ENCODE measurements at regions of chr12 and their contacts with region 1.

Region 1: GRCh38 chr12:10140001-10140400 is 10.0 kb upstream of the CLEC7A start:
- DNase-seq: no peak
- H3K4me3 ChIP-seq: no peak overlapping the region
- CTCF ChIP-seq: peak in 1 of 3 donors; percentile 21
- POLR2A ChIP-seq: no peak

Region 2: GRCh38 chr12:10033783-10034545 is 106.0 kb before region 1 on chr12:
- intact Hi-C with region 1: loop called (anchors 10 kb)
- DNase-seq: no peak
- H3K4me3 ChIP-seq: no peak overlapping the region
- CTCF ChIP-seq: no peak
- POLR2A ChIP-seq: no peak

Region 3: DNA sequence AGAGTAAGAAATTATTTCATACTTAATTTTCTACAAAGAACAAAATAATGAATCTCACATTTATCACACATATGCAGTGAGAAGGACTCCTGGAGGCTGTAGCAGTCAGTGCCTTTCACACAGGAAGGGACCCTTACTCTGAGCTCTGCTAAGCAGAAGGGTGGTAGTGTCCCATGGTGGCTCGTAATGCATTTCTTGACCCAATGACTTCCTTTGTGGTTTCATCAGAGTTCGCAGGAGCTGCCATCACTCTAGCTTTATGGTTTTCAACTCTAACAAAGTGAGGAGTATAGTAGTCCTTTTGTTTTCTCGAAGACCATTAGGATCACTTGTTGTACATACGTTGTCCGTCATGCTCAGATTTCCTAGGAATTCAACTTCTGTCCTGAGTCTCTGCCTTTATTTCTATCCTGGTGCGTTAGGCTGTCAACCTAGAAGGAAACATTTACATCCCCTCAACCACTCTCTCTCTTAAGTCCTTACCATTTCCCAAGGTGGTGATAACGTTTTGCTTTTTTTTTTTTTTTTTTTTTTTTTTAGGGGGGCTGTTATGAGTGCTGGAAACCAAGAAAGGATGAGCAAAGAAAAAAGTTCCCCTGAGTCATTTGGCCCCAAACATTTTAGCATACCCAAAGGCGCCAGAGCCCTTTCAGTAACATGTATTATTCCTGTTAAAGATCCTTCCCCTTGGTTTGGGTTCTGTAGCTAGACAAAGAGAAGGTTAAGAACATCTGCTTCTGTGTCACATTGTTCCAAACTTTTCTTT is 109.9 kb after region 1 on chr12:
- intact Hi-C with region 1: no loop called
- DNase-seq: no peak
- H3K4me3 ChIP-seq: no peak overlapping the region
- CTCF ChIP-seq: no peak
- POLR2A ChIP-seq: no peak

Measured in lower leg skin (tissue), 4 donors.